Ascending aorta (tissue), 2 donors: ENCODE measurements at regions of chr5 and their contacts with region 1.

Region 1: GRCh38 chr5:98773464-98774191 is at the start of gene RGMB:
- DNase-seq: peak; percentile 94 to 99
- H3K4me3 ChIP-seq: peak within 1 kb of the TSS; percentile 67 to 94
- H3K27ac ChIP-seq: peak within 1 kb of the TSS; percentile 88 to 91
- H3K4me1 ChIP-seq: peaks cover 0 to 13% of the 10 kb centered on the region in 2 donors
- H3K27me3 ChIP-seq: no peaks in the 10 kb centered on the region
- CTCF ChIP-seq: no peak
- total RNA-seq, gene RGMB: 20.9 TPM

Region 2: GRCh38 chr5:96807075-96807654 is 1966.5 kb before region 1 on chr5:
- intact Hi-C with region 1: loop called (anchors 5 kb)
- DNase-seq: peak in 1 of 2 donors; percentile 84
- H3K4me3 ChIP-seq: peak overlapping the region; percentile 95 to 99
- H3K27ac ChIP-seq: peak overlapping the region; percentile 100
- H3K4me1 ChIP-seq: peaks cover 0 to 4% of the 10 kb centered on the region in 2 donors
- H3K27me3 ChIP-seq: no peaks in the 10 kb centered on the region
- CTCF ChIP-seq: no peak

Region 3: GRCh38 chr5:97183100-97183929 is 1590.3 kb before region 1 on chr5 and contains the start of gene RIOK2:
- intact Hi-C with region 1: loop called (anchors 2 kb)
- DNase-seq: peak; percentile 74 to 96
- H3K4me3 ChIP-seq: peak within 1 kb of the TSS; percentile 69 to 79
- H3K27ac ChIP-seq: peak within 1 kb of the TSS; percentile 73 to 93
- H3K4me1 ChIP-seq: peaks cover 0 to 14% of the 10 kb centered on the region in 2 donors
- H3K27me3 ChIP-seq: no peaks in the 10 kb centered on the region
- CTCF ChIP-seq: no peak
- total RNA-seq, gene RIOK2: 3.7 TPM

Region 4: DNA sequence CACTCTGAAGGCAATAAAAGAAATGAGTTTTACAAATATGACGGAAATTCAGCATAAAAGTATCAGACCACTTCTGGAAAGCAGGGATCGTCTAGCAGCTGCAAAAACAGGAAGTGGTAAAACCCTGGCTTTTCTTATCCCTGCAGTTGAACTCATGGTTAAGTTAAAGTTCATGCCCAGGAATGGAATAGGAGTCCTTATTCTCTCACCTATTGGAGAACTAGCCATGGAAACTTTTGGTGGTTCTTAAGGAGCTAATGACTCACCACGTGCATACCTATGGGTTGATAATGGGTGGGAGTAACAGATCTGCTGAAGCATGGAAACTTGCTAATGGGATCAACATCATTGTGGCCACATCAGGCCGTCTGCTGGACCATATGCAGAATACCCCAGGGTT is 93.7 kb before region 1 on chr5:
- intact Hi-C with region 1: no loop called
- DNase-seq: no peak
- H3K4me3 ChIP-seq: no peak overlapping the region
- H3K27ac ChIP-seq: no peak overlapping the region
- H3K4me1 ChIP-seq: no peaks in the 10 kb centered on the region
- H3K27me3 ChIP-seq: no peaks in the 10 kb centered on the region
- CTCF ChIP-seq: no peak

Region 5: DNA sequence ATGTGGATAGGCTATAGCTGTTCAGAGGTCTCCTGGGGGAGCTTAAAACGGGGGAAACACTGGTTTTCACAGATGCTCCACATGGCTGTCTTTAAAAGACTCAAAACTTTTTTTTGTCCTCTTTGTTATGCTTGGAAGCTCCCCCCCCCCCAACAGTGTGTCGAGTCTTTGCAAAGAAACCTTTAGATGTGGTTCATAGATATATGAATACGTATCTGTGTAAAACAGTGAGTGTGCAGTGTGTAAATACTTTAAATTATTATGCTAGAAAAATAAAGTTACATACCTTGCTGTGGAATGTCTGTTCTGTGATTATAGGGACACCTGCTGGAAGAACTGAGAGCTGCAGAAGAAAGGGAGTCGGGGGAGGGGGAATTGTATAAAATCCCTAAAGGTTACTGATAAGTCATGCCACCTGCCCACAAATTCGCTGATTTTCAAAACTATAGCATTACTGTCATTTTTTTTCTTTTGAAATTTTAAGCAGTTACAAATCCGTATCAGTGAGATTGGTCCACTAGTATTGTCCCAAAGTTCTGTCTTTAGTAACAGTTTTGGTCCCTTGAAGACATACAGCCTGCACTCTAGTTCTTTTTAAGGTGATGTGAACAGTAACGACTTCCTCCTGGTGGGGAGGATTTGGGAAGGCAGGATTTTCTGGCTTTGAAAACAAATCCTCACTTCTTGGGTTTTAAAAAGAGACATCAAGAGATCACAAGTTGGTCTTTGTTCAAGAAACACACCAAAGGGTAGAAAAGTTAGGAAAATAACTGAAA is 22.8 kb after region 1 on chr5:
- intact Hi-C with region 1: loop called (anchors 2 kb)
- DNase-seq: no peak
- H3K4me3 ChIP-seq: no peak overlapping the region
- H3K27ac ChIP-seq: no peak overlapping the region
- H3K4me1 ChIP-seq: no peaks in the 10 kb centered on the region
- H3K27me3 ChIP-seq: no peaks in the 10 kb centered on the region
- CTCF ChIP-seq: peak; percentile 51 to 82 (median 75)

Region 6: GRCh38 chr5:98827161-98827560 is 53.5 kb after region 1 on chr5:
- intact Hi-C with region 1: no loop called
- DNase-seq: no peak
- H3K4me3 ChIP-seq: no peak overlapping the region
- H3K27ac ChIP-seq: no peak overlapping the region
- H3K4me1 ChIP-seq: no peaks in the 10 kb centered on the region
- H3K27me3 ChIP-seq: no peaks in the 10 kb centered on the region
- CTCF ChIP-seq: peak in 1 of 3 experiments; percentile 37

Region 7: GRCh38 chr5:98928873-98929696 is 155.5 kb after region 1 on chr5 and contains the start of gene CHD1:
- intact Hi-C with region 1: loop called (anchors 1 kb)
- DNase-seq: peak; percentile 93 to 99
- H3K4me3 ChIP-seq: peak within 1 kb of the TSS; percentile 91 to 93
- H3K27ac ChIP-seq: peak within 1 kb of the TSS; percentile 100
- H3K4me1 ChIP-seq: peaks cover 0 to 20% of the 10 kb centered on the region in 2 donors
- H3K27me3 ChIP-seq: no peaks in the 10 kb centered on the region
- CTCF ChIP-seq: no peak
- total RNA-seq, gene CHD1: 35.5 TPM

Region 8: GRCh38 chr5:99248066-99248465 is 474.4 kb after region 1 on chr5:
- intact Hi-C with region 1: no loop called
- DNase-seq: no peak
- H3K4me3 ChIP-seq: no peak overlapping the region
- H3K27ac ChIP-seq: no peak overlapping the region
- H3K4me1 ChIP-seq: no peaks in the 10 kb centered on the region
- H3K27me3 ChIP-seq: no peaks in the 10 kb centered on the region
- CTCF ChIP-seq: no peak

Region 9: GRCh38 chr5:100535060-100536005 is 1761.7 kb after region 1 on chr5 and contains the start of gene FAM174A:
- intact Hi-C with region 1: loop called (anchors 10 kb)
- DNase-seq: peak; percentile 84 to 98
- H3K4me3 ChIP-seq: peak within 1 kb of the TSS; percentile 78 to 84
- H3K27ac ChIP-seq: peak within 1 kb of the TSS; percentile 93
- H3K4me1 ChIP-seq: peaks cover 0 to 22% of the 10 kb centered on the region in 2 donors
- H3K27me3 ChIP-seq: no peaks in the 10 kb centered on the region
- CTCF ChIP-seq: no peak
- total RNA-seq, gene FAM174A: 38.5 TPM